Right ventricle myocardium inferior (tissue), 1 donor: ENCODE measurements at regions of chr2 and their contacts with region 1.

Region 1: DNA sequence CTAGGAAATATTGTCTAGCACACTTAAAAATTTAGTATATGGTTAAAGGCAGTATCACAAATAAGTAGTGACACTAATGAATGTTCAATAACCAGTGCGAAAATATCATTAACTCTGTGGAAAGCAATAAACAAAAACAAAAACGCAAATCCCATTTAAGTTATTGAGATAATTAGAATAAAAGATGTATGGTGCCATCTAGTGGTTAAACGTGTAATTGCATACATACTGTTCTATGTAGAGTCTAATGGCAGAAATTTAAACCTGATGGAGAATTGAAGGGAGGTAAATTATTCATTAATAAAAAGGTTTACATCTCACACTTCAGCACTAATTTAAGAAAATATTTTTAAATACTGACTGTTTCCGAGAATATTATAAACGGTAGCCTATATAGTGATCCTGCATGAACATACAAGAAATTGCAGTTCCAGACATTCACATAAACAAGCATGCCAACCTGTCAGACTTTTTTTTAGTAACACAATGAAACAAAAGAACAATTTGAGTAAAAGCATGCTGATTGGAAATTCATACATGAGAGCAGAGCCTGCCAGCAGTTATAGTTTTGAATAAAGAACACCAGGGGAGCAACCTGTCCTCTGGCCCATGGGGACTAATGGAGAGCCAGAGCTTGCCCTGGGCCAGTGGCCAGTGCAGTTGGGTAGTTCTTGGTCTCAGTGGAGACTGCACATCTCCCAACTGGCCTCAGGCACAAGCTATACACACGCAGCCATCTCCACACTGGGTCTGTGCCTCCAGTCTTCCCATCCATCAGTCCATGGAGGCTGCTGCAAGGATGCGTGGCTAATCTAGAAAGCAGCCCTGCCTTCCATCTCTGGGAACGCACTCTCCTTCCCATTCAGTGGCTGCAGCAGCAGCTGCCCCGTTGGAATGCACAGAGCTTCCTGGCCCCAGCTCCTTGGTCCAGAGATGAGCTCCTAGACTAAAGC is 28.0 kb downstream of the GCG start:
- DNase-seq: no peak
- ATAC-seq: no peak

Region 2: GRCh38 chr2:161586517-161587167 is 537.4 kb before region 1 on chr2:
- intact Hi-C with region 1: loop called (anchors 5 kb)
- DNase-seq: no peak
- ATAC-seq: no peak

Region 3: DNA sequence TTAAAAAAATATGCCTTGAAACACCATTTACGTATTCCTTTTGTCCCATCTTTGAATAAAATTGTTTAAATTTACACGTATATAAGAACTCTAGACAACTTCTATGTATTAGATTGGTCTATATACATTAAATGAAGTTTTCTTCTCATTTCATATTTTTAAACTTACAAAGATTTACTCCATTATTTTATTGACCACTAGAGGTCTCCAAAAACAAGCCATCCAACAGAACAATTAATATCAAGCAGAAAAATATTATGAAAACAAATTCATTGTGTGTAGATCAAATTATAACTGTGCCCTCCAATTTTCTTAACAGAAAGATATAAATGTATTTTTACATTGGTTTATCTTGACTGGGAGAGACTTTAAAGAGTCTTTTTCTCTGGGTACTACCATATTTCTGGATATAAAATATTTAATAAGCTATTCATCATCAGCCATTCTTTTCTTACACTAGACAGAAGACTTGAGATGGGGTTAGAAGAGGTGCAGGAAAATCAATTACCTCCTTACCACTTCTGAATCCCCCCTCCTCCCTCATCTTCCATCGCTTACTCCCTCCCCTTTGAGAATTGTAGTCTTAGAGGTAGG is 116.5 kb before region 1 on chr2:
- intact Hi-C with region 1: loop called (anchors 2 kb)
- DNase-seq: no peak
- ATAC-seq: no peak

Region 4: GRCh38 chr2:162221064-162221463 is 97.0 kb after region 1 on chr2:
- intact Hi-C with region 1: no loop called
- DNase-seq: peak; percentile 88
- ATAC-seq: peak; percentile 70